ENCODE measurements at regions of chr20 and their contacts with region 1.

Region 1: GRCh38 chr20:18587665-18588573 is at the start of gene DTD1:
- DNase-seq: peak; percentile 94 to 97
- H3K4me3 ChIP-seq: peak within 1 kb of the TSS; percentile 51
- H3K4me3 Mint-ChIP-seq: peak within 1 kb of the TSS; percentile 74
- H3K27ac Mint-ChIP-seq: peak within 1 kb of the TSS; percentile 58
- H3K4me1 ChIP-seq: peaks cover 17% of the 10 kb centered on the region
- H3K4me1 Mint-ChIP-seq: peaks cover 14% of the 10 kb centered on the region
- H3K27me3 ChIP-seq: no peaks in the 10 kb centered on the region
- H3K27me3 Mint-ChIP-seq: no peaks in the 10 kb centered on the region
- CTCF ChIP-seq: peak; percentile 61 to 79
- total RNA-seq, gene DTD1: 90.0 and 109 TPM in 2 replicates

Region 2: GRCh38 chr20:18566892-18567742 is 20.8 kb before region 1 on chr20 and contains the start of gene SMIM26:
- CTCF ChIA-PET with region 1: interaction called, 5 read pairs
- POLR2A ChIA-PET with region 1: interaction called, 9 read pairs
- intact Hi-C with region 1: loop called (anchors 1 kb)
- DNase-seq: peak; percentile 95
- H3K4me3 ChIP-seq: peak within 1 kb of the TSS; percentile 59
- H3K4me3 Mint-ChIP-seq: peak within 1 kb of the TSS; percentile 84
- H3K27ac Mint-ChIP-seq: peak within 1 kb of the TSS; percentile 74
- H3K4me1 ChIP-seq: no peaks in the 10 kb centered on the region
- H3K4me1 Mint-ChIP-seq: no peaks in the 10 kb centered on the region
- H3K27me3 ChIP-seq: no peaks in the 10 kb centered on the region
- H3K27me3 Mint-ChIP-seq: no peaks in the 10 kb centered on the region
- CTCF ChIP-seq: no peak
- total RNA-seq, gene SMIM26: 96.2 and 99.3 TPM in 2 replicates

Region 3: DNA sequence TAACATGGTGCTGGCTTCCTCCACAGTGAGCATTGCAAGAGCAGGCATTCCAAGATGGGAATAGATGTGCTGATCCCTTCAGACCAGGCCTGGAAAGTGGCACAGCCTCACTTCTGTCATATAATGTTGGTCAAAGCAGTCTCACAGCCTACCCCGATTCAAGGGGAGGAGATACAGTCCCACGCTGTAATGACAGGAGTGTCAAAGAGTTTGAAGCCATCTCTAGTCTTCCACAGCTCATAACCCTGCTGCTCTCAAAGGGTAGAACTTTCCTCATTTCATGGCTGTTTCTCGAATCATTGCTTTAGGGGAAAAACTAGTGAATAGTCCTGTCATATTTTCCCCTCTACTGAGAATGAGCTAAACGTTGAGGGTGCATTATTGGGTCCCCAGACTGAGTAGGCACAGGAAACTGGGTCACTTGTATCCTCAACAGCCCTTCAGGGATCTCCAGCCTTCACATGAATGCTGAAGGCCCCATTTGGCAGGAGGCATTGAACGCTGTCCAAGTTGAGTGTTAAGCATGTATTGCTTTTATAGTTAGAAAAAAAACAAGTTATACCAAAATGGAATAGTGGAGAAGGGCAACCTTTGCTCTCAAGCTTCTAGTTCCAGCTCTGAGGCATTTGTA is 27.2 kb after region 1 on chr20:
- CTCF ChIA-PET with region 1: no interaction called
- POLR2A ChIA-PET with region 1: interaction called, 15 read pairs
- intact Hi-C with region 1: no loop called
- DNase-seq: no peak
- H3K4me3 ChIP-seq: no peak overlapping the region
- H3K4me3 Mint-ChIP-seq: no peak overlapping the region
- H3K27ac Mint-ChIP-seq: no peak overlapping the region
- H3K4me1 ChIP-seq: no peaks in the 10 kb centered on the region
- H3K4me1 Mint-ChIP-seq: no peaks in the 10 kb centered on the region
- H3K27me3 ChIP-seq: no peaks in the 10 kb centered on the region
- H3K27me3 Mint-ChIP-seq: no peaks in the 10 kb centered on the region
- CTCF ChIP-seq: no peak